Heart left ventricle (tissue), 16 donors: ENCODE measurements at regions of chr17 and their contacts with region 1.

Region 1: GRCh38 chr17:38584350-38584925 is 21.3 kb downstream of the SRCIN1 start:
- DNase-seq: peak; percentile 39 to 84 (median 56)
- ATAC-seq: peak; percentile 74 to 91 (median 80)
- H3K4me3 ChIP-seq: no peak overlapping the region
- H3K27ac ChIP-seq: no peak overlapping the region
- H3K4me1 ChIP-seq: peaks cover 0 to 10% (median 0%) of the 10 kb centered on the region in 12 donors
- H3K27me3 ChIP-seq: peaks cover 7 to 85% (median 26%) of the 10 kb centered on the region in 9 donors
- CTCF ChIP-seq: peak; percentile 79 to 98 (median 92)
- POLR2A ChIP-seq: no peak

Region 2: DNA sequence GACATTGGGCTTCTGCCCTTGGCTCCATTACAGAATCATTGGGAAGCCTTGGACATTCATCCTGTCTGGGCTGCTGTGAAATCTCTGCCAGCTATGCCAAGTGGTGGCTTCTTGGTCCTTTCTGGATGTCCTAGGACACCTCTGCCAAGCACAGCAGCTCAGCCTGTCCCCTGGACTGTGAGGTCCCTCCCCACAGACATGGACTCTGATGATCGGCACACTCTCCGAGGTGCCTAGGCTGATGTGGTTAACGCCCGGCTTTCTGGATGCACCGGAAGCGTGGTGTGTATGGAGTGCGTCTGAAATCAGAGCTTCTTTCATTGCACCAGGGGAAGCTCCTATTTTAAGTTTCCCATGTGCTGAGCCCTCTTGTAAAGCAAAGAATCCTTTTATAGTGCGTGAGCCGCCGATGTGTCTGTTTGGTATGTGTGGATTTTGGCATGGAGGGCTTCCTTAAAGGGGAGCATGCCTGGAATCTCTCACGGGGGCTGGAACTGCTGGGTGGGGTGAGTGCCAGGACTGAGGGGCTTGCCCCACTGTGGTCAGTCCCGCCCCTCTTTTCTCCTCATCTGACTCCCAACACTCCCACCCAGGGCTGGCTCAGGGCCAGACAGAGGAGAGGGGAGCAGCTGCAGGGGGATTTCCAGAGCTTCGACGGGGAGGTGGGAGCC is 163.1 kb before region 1 on chr17:
- intact Hi-C with region 1: loop called in 1 of 10 experiments (anchors 5 kb)
- DNase-seq: no peak
- ATAC-seq: peak; percentile 4 to 31 (median 12)
- H3K4me3 ChIP-seq: peak overlapping the region in 2 of 12 donors; percentile 15 to 17
- H3K27ac ChIP-seq: peak overlapping the region in 10 of 12 donors; percentile 27 to 79 (median 52)
- H3K4me1 ChIP-seq: peaks cover 0 to 65% (median 33%) of the 10 kb centered on the region in 12 donors
- H3K27me3 ChIP-seq: peaks cover 0 to 31% (median 19%) of the 10 kb centered on the region in 9 donors
- CTCF ChIP-seq: no peak
- POLR2A ChIP-seq: no peak

Region 3: GRCh38 chr17:38509008-38509771 is 75.2 kb before region 1 on chr17:
- intact Hi-C with region 1: loop called in 1 of 10 experiments (anchors 10 kb)
- DNase-seq: peak; percentile 70 to 79 (median 78)
- ATAC-seq: peak; percentile 63 to 74 (median 66)
- H3K4me3 ChIP-seq: peak overlapping the region in 5 of 12 donors; percentile 17 to 41 (median 31)
- H3K27ac ChIP-seq: peak overlapping the region in 1 of 12 donors; percentile 44
- H3K4me1 ChIP-seq: peaks cover 0 to 30% (median 7%) of the 10 kb centered on the region in 12 donors
- H3K27me3 ChIP-seq: peaks cover 0 to 32% (median 0%) of the 10 kb centered on the region in 9 donors
- CTCF ChIP-seq: peak; percentile 48 to 82 (median 60)
- POLR2A ChIP-seq: no peak

Region 4: GRCh38 chr17:38557836-38558727 is 26.4 kb before region 1 on chr17:
- intact Hi-C with region 1: loop called in 3 of 10 experiments (anchors 1 to 2 kb)
- DNase-seq: peak; percentile 88 to 95 (median 92)
- ATAC-seq: peak; percentile 77 to 95 (median 92)
- H3K4me3 ChIP-seq: peak overlapping the region; percentile 8 to 57 (median 44)
- H3K27ac ChIP-seq: peak overlapping the region in 4 of 12 donors; percentile 3 to 32 (median 16)
- H3K4me1 ChIP-seq: peaks cover 0 to 38% (median 25%) of the 10 kb centered on the region in 12 donors
- H3K27me3 ChIP-seq: peaks cover 29 to 52% (median 43%) of the 10 kb centered on the region in 9 donors
- CTCF ChIP-seq: peak; percentile 85 to 97 (median 93)
- POLR2A ChIP-seq: peak in 1 of 2 donors; percentile 43

Region 5: GRCh38 chr17:38654411-38655398 is 70.3 kb after region 1 on chr17:
- intact Hi-C with region 1: no loop called
- DNase-seq: no peak
- ATAC-seq: no peak
- H3K4me3 ChIP-seq: no peak overlapping the region
- H3K27ac ChIP-seq: no peak overlapping the region
- H3K4me1 ChIP-seq: peaks cover 0 to 8% (median 0%) of the 10 kb centered on the region in 12 donors
- H3K27me3 ChIP-seq: peaks cover 0 to 36% (median 18%) of the 10 kb centered on the region in 9 donors
- CTCF ChIP-seq: no peak
- POLR2A ChIP-seq: no peak